Esophagus muscularis mucosa (tissue), 4 donors: ENCODE measurements at regions of chr16 and their contacts with region 1.

Region 1: GRCh38 chr16:67372664-67373063 is 20.6 kb downstream of the TPPP3 start:
- DNase-seq: no peak
- H3K4me3 ChIP-seq: no peak overlapping the region
- H3K27ac ChIP-seq: no peak overlapping the region
- H3K4me1 ChIP-seq: no peaks in the 10 kb centered on the region
- H3K27me3 ChIP-seq: no peaks in the 10 kb centered on the region
- CTCF ChIP-seq: peak; percentile 61 to 62 (median 61)
- EP300 ChIP-seq: no peak
- POLR2A ChIP-seq: no peak

Region 2: DNA sequence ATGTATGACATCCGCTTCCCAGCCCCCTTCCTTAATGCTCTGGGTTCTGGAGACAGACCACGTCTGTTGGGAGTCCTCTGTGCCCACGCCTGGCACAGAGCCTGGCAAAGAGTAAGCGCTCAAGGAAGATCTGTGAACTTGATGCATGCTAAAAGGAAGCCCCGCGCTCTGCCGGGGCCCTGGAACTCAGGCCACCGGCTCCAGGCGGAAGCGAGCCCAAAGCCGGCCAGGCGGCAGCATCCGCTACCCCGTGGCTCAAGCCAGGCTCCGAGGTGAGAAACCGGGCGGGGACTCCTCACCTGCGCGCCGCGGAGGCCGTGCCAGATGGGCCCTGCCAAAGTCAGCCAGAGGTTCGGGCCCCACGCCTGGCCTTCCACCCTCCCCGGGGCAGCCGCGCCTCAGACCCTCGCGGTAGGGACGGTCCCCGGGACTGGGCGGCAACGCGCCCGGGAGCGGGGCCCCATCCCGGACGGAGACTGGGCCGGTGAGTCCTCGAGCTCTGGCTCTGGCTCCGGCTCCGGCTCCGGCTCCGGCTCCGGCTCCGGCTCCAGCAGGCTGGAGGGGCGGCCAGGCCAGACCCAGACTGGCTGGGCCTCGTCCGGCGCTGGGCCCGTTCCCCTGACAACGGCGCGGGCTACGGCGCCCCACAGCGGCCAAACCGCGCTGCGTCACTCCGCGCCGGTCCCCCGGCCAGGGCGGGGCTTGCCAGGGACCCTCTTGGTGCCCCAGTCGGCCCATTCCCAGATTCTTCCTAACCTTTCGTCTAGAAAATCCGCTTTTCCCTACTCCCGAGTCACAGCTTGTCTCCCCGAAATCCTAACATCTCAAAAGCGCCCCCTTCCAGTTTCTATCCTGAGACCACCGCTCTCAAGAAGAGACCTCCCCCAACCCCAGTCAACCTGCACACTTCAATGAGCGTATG is 43.5 kb after region 1 on chr16 and contains the start of gene ZDHHC1:
- intact Hi-C with region 1: loop called (anchors 5 kb)
- DNase-seq: no peak
- H3K4me3 ChIP-seq: peak within 1 kb of the TSS; percentile 70 to 93 (median 77)
- H3K27ac ChIP-seq: peak within 1 kb of the TSS; percentile 77 to 87 (median 82)
- H3K4me1 ChIP-seq: peaks cover 12 to 28% (median 19%) of the 10 kb centered on the region in 4 donors
- H3K27me3 ChIP-seq: no peaks in the 10 kb centered on the region
- CTCF ChIP-seq: peak; percentile 51 to 62 (median 57)
- EP300 ChIP-seq: no peak
- POLR2A ChIP-seq: no peak
- total RNA-seq, gene ZDHHC1: 11.6 to 27.5 (median 20.8) TPM